ENCODE measurements at regions of chr12 and their contacts with region 1.

Region 1: GRCh38 chr12:70365648-70366518 is at the start of gene KCNMB4:
- DNase-seq: peak; percentile 65 to 90
- H3K4me3 ChIP-seq: peak within 1 kb of the TSS; percentile 66
- H3K27ac ChIP-seq: no peak within 1 kb of the TSS
- H3K4me1 ChIP-seq: peaks cover 17% of the 10 kb centered on the region
- H3K27me3 ChIP-seq: no peaks in the 10 kb centered on the region
- CTCF ChIP-seq: no peak
- total RNA-seq, gene KCNMB4: 6.3 and 6.7 TPM in 2 replicates

Region 2: DNA sequence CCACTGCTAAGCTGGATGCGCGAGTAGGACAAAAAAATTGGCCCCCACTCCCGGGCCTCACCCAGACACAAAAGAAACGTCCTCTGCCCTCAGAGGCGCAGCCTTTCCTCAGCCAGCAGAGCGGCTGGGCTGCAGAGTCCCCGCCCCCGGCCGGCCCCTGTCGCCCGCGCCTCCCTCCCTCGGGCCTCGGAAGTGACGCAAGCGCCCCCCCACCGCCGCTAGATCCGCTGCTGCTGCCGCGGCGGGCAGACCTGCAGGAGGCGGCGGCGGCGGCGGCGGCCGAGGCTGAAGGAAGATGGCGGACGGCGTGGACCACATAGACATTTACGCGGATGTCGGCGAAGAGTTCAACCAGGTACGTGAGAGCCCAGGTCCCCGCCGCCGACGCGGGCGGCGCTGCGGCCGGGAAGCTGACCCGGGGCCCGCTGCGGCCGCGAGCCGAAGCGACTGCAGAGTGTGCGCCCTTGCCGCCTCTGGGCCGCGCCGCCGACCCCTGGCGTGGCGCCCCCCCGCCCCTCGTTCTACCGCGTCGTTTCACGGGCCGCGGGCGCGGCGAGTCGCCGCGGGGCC is 1126.4 kb before region 1 on chr12 and contains the start of gene CPSF6:
- CTCF ChIA-PET with region 1: no interaction called
- POLR2A ChIA-PET with region 1: interaction called, 18 read pairs
- intact Hi-C with region 1: no loop called
- DNase-seq: peak; percentile 77 to 92
- H3K4me3 ChIP-seq: peak within 1 kb of the TSS; percentile 99
- H3K27ac ChIP-seq: peak within 1 kb of the TSS; percentile 63
- H3K4me1 ChIP-seq: peaks cover 22% of the 10 kb centered on the region
- H3K27me3 ChIP-seq: no peaks in the 10 kb centered on the region
- CTCF ChIP-seq: no peak
- total RNA-seq, gene CPSF6: 56.8 and 77.9 TPM in 2 replicates

Region 3: DNA sequence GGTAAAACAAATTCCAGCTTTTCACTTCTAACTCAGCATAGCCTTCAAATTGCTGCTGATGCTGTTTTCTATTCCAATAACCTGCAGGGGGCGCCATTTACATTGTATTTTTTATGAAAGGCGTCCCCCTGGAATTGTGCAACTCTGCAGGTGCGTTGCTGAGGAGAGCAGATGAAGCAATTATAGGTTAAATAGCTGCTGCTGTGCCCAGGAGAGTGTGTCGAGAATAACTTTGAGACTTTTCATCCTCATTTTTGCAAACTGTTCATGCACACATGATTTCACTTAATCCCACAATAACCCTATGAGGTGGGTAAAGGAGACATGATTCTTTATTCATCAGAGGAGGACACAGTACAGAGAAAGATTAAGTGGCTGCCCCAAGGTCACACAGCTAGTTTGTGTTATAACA is 465.2 kb before region 1 on chr12:
- CTCF ChIA-PET with region 1: no interaction called
- POLR2A ChIA-PET with region 1: no interaction called
- intact Hi-C with region 1: loop called (anchors 2 kb)
- DNase-seq: peak; percentile 56 to 60
- H3K4me3 ChIP-seq: no peak overlapping the region
- H3K27ac ChIP-seq: no peak overlapping the region
- H3K4me1 ChIP-seq: peaks cover 8% of the 10 kb centered on the region
- H3K27me3 ChIP-seq: no peaks in the 10 kb centered on the region
- CTCF ChIP-seq: peak; percentile 95

Region 4: GRCh38 chr12:70242695-70243509 is 123.0 kb before region 1 on chr12 and contains the start of gene CNOT2:
- CTCF ChIA-PET with region 1: no interaction called
- POLR2A ChIA-PET with region 1: no interaction called
- intact Hi-C with region 1: loop called (anchors 5 kb)
- DNase-seq: peak; percentile 79 to 85
- H3K4me3 ChIP-seq: peak within 1 kb of the TSS; percentile 97
- H3K27ac ChIP-seq: peak within 1 kb of the TSS; percentile 98
- H3K4me1 ChIP-seq: peaks cover 37% of the 10 kb centered on the region
- H3K27me3 ChIP-seq: no peaks in the 10 kb centered on the region
- CTCF ChIP-seq: no peak
- total RNA-seq, gene CNOT2: 57.9 and 85.4 TPM in 2 replicates

Region 5: DNA sequence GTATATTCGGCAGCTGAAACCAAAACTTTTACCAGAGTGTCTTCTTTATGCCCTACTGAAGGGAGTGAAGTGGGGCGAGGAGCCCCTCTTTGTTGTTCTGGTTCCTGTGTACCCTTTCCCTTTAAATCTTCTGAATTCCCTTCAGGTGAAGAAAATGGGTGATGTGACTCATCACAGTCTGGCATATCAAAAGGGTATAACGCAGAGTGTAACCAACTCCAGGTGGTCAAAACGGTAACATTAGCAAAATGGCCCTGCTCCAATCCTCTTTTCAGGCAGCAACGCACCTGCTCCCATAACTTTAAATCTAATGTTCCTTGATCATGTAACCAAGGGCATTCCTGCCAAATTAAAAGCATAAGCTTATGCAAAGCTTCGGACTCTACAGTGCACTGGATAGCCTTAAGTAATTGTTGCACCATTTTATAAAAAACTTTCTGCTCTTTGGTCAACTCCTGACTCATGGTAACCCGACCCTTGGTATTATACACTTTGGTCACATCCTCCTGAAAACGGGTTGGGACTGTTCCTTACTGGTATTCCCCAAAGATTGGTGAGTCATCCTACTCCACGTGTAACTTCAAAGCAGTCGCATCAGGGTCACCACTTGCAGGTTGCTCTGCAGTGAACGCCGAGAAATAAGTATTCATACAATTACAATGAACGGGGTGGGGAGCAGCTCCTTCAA is 83.3 kb after region 1 on chr12:
- CTCF ChIA-PET with region 1: no interaction called
- POLR2A ChIA-PET with region 1: no interaction called
- intact Hi-C with region 1: loop called (anchors 2 kb)
- DNase-seq: peak; percentile 58 to 96
- H3K4me3 ChIP-seq: peak overlapping the region; percentile 38
- H3K27ac ChIP-seq: peak overlapping the region; percentile 86
- H3K4me1 ChIP-seq: peaks cover 35% of the 10 kb centered on the region
- H3K27me3 ChIP-seq: no peaks in the 10 kb centered on the region
- CTCF ChIP-seq: no peak

Region 6: DNA sequence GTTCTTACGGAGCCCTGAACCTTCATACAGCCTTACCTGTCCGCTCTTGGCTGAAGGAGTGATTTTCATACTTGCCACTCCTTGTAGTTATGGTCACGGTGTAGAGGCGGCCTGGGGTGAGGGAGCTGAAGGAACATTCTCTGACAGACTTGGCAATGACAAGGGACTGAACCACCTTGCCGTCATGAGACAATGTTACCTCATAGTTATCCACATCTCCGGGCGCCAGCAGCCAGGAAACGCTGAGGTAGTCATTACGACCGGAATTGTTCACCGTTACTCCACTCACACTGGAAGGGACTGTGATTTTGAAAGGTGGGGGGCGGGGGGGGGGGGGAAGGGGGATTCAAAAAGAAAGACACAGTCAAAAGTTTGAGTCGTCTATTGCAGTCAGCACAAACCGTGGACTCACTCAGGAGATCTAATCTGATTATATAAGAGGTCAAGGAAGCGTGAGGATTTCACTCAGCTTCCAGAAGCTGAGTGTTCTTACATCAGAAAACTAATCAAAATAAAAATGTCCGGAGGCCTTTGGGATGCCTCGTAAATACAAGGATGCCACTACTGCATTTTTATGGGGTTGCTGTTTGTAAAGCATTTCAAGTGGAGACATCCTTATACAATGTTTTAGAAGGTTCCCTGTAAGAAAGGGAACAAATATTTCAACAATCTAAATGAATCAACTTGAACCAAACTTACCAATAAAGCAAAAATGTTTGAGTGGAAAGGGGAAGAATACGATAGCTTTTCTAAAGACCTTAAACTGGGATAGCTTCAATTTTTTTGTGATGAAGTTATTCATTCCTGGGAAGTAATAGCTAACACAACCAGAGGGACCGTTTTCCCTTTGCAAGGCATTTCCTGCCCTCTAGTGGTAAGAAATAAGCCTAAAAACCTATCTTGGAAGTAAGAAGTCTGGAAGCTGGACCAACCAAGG is 210.7 kb after region 1 on chr12:
- CTCF ChIA-PET with region 1: no interaction called
- POLR2A ChIA-PET with region 1: interaction called, 6 read pairs
- intact Hi-C with region 1: loop called (anchors 5 kb)
- DNase-seq: peak in 1 of 2 experiments; percentile 65
- H3K4me3 ChIP-seq: no peak overlapping the region
- H3K27ac ChIP-seq: no peak overlapping the region
- H3K4me1 ChIP-seq: no peaks in the 10 kb centered on the region
- H3K27me3 ChIP-seq: no peaks in the 10 kb centered on the region
- CTCF ChIP-seq: peak; percentile 86